ENCODE measurements at regions of chr1 and their contacts with region 1.

Region 1: GRCh38 chr1:21573971-21574465 is 64.8 kb downstream of the ALPL start:
- DNase-seq: peak; percentile 89
- ATAC-seq: peak; percentile 84 to 88

Region 2: GRCh38 chr1:21368515-21369289 is 205.3 kb before region 1 on chr1:
- intact Hi-C with region 1: loop called (anchors 5 to 10 kb)
- DNase-seq: peak; percentile 83
- ATAC-seq: peak; percentile 94 to 96

Region 3: GRCh38 chr1:21378705-21379494 is 195.1 kb before region 1 on chr1:
- intact Hi-C with region 1: loop called (anchors 5 to 10 kb)
- DNase-seq: no peak
- ATAC-seq: no peak

Region 4: DNA sequence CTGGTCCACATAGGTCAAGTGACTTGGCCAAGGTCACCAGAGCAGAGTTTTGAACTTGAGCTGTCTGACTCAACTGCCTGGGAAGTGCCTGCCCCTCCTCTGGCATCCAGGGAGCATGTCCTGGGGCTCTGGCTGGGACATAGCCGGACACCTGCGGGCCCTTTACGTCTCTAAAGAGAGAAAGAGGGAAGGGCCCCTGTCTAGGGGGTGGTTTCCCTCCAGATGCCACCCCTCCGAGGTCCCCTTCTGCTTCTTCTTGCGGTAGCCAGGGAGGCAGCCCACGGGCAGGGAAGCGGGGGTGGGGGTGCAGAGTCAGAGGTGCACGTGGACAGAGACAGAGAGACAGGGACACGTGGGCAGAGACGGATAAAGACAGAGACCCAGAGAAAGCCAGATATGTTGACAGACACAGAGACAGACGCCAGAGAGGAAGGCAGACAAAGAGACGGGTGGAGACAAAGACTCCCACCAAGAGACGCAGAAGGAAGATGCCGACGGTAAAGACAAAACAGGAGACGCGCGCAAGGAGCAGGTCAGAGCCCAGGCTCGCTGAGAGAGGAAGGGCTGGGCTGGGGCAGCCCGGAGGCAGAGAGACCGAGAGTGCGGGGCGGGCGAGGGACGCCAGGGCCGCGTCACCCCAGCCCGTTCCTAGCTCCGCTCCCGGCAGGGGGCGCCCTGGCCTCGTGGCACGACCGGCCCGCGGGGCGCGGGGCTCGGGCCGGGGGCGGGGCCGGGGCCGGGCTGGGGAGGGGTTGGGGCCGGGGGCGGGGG is 65.3 kb before region 1 on chr1:
- intact Hi-C with region 1: loop called (anchors 1 to 2 kb)
- DNase-seq: peak; percentile 84
- ATAC-seq: peak; percentile 78 to 82

Region 5: GRCh38 chr1:21534674-21535378 is 39.2 kb before region 1 on chr1:
- intact Hi-C with region 1: loop called in 1 of 2 experiments (anchors 5 kb)
- DNase-seq: no peak
- ATAC-seq: no peak

Region 6: GRCh38 chr1:21659099-21659923 is 85.3 kb after region 1 on chr1:
- intact Hi-C with region 1: loop called in 1 of 2 experiments (anchors 10 kb)
- DNase-seq: peak; percentile 77
- ATAC-seq: peak; percentile 82 to 84